ENCODE measurements at regions of chr3 and their contacts with region 1.

Region 1: GRCh38 chr3:135268941-135269532 is 474.0 kb downstream of the EPHB1 start:
- DNase-seq: no peak
- ATAC-seq: no peak
- H3K4me3 ChIP-seq: no peak overlapping the region
- H3K4me3 Mint-ChIP-seq: no peak overlapping the region
- H3K27ac ChIP-seq: no peak overlapping the region
- H3K27ac Mint-ChIP-seq: no peak overlapping the region
- H3K4me1 ChIP-seq: no peaks in the 10 kb centered on the region
- H3K4me1 Mint-ChIP-seq: no peaks in the 10 kb centered on the region
- H3K27me3 ChIP-seq: no peaks in the 10 kb centered on the region
- H3K27me3 Mint-ChIP-seq: no peaks in the 10 kb centered on the region
- CTCF ChIP-seq: no peak

Region 2: DNA sequence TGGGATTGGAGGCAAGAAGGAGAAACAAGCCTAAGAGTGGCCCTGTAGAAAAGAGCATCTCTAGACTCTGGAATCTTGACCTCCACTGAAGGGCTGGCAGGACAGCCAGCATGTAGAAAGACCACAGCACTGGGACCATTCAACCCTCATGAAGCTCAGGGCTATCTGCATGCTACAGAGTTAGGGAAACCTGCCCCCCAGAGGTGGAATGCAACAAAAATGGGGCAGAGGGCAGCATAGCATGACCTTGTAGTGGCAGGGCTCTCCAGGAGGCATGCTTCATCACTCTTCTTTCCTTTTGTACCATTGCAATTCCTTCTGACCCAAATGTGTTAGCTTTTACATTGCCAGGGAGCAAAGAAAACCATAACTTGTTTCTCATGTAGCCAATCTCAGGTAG is 28.6 kb before region 1 on chr3:
- CTCF ChIA-PET with region 1: no interaction called
- POLR2A ChIA-PET with region 1: no interaction called
- intact Hi-C with region 1: loop called in 1 of 2 experiments (anchors 1 kb)
- DNase-seq: no peak
- ATAC-seq: no peak
- H3K4me3 ChIP-seq: no peak overlapping the region
- H3K4me3 Mint-ChIP-seq: no peak overlapping the region
- H3K27ac ChIP-seq: no peak overlapping the region
- H3K27ac Mint-ChIP-seq: no peak overlapping the region
- H3K4me1 ChIP-seq: no peaks in the 10 kb centered on the region
- H3K4me1 Mint-ChIP-seq: no peaks in the 10 kb centered on the region
- H3K27me3 ChIP-seq: no peaks in the 10 kb centered on the region
- H3K27me3 Mint-ChIP-seq: no peaks in the 10 kb centered on the region
- CTCF ChIP-seq: no peak